PC-3 (cell line): ENCODE measurements at regions of chr15 and their contacts with region 1.

Region 1: DNA sequence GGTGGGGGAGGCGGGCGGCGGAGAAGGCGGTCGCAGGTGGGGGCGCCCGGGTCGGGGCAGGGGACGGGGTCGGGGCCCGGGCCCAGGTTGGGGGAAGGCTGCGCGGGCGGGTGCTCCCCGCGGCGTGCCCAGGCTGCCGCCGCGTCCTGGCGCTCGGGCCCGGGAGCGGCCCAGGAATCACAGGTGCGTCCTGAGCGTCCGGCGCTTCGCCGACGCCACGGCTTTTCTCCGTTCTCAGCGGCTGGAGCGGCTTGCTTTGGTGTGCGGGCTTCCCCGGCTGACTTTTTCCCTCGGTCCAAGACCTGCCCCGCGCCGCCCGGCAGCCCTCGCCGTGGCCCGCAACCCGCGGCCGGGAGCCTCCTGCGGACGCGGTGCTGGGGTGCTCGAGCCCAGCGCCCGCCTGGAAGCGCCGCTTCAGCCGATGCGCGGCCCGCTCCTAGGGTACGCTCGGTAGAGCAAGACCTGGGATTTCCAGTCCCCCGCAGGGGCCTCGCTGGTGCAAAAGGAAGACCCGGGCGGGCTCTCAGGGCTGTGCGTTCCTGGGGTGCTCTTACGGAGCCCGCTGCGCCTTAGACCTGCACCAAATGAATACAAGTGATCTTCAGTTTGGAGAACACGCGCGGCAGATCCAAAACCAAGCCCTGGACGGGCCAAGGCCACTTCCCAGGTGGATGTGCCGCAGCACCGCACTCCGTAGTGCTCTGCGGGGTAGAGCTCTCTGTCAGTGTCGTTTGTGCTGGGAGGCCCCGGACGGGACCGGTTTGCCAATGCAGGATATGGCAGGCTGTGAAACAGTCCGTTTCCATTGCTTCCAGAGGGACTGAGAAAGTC is 639 bp downstream of the NIPA1 start:
- DNase-seq: peak; percentile 40
- ATAC-seq: peak; percentile 42
- H3K4me3 ChIP-seq: peak overlapping the region; percentile 81
- H3K27ac ChIP-seq: peak overlapping the region; percentile 30; the same call in 1 of the 2 replicates
- H3K4me1 ChIP-seq: no peaks in the 10 kb centered on the region
- H3K27me3 ChIP-seq: no peaks in the 10 kb centered on the region
- CTCF ChIP-seq: no peak

Region 2: GRCh38 chr15:22735781-22736180 is 51.3 kb before region 1 on chr15:
- CTCF ChIA-PET with region 1: no interaction called
- POLR2A ChIA-PET with region 1: no interaction called
- intact Hi-C with region 1: loop called (anchors 1 kb)
- DNase-seq: peak; percentile 81
- ATAC-seq: peak; percentile 75
- H3K4me3 ChIP-seq: peak overlapping the region; percentile 42; the same call in 1 of the 2 replicates
- H3K27ac ChIP-seq: peak overlapping the region; percentile 68
- H3K4me1 ChIP-seq: peaks cover 23% of the 10 kb centered on the region
- H3K27me3 ChIP-seq: no peaks in the 10 kb centered on the region
- CTCF ChIP-seq: no peak

Region 3: GRCh38 chr15:22838292-22839042 is 51.4 kb after region 1 on chr15 and contains the start of gene NIPA2:
- CTCF ChIA-PET with region 1: no interaction called
- POLR2A ChIA-PET with region 1: interaction called, 3 read pairs
- intact Hi-C with region 1: loop called (anchors 2 kb)
- DNase-seq: peak; percentile 99
- ATAC-seq: peak; percentile 94
- H3K4me3 ChIP-seq: peak within 1 kb of the TSS; percentile 91
- H3K27ac ChIP-seq: peak within 1 kb of the TSS; percentile 85
- H3K4me1 ChIP-seq: peaks cover 9% of the 10 kb centered on the region
- H3K27me3 ChIP-seq: no peaks in the 10 kb centered on the region
- CTCF ChIP-seq: no peak
- total RNA-seq, gene NIPA2: 108 and 115 TPM in 2 replicates